Pancreas (tissue), 10 donors: ENCODE measurements at regions of chr11 and their contacts with region 1.

Region 1: DNA sequence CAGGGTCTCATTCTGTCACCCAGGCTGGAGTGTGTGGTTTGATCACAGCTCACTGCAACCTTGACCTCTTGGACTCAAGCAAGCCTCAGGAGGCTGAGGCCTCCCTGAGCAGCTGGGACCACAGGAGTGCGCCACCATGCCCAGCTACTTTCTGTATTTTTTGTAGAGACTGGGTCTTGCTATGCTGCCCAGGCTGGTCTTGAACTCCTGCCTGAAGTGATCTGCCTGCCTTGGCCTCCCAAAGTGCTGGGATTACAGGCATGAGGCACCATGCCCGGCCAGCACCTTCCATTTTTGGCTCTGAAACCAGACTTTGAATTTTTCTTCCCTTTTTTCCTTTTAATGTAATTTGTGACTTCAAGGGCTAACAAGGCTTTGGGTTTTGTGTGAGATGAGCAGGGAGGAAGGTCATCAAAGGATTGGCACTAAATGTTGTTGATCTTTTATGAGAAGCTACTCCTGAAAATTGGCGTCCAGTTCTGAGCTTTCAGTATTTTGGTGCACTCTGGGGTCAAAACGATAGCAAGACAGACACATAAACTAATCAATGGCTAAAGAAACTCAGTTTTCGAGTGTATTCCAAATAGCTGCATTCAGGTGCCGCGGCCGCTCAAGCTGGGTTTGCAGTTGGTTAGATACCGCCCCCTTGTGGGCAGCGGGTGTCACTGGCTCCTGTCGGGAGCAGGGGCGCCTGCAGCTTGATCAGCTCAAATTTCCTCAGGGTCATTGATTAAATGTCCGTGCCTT is 51.9 kb upstream of the CLMP start:
- DNase-seq: peak; percentile 63 to 91 (median 83)
- ATAC-seq: peak; percentile 93 to 100 (median 96)
- H3K4me3 ChIP-seq: no peak overlapping the region
- H3K27ac ChIP-seq: no peak overlapping the region
- H3K4me1 ChIP-seq: no peaks in the 10 kb centered on the region
- H3K27me3 ChIP-seq: no peaks in the 10 kb centered on the region
- CTCF ChIP-seq: peak; percentile 96 to 98 (median 96)

Region 2: GRCh38 chr11:123103326-123103980 is 143.5 kb before region 1 on chr11:
- intact Hi-C with region 1: loop called in 1 of 3 experiments (anchors 5 kb)
- DNase-seq: peak in 1 of 6 donors; percentile 25
- ATAC-seq: peak in 3 of 4 donors; percentile 76 to 83 (median 81)
- H3K4me3 ChIP-seq: no peak overlapping the region
- H3K27ac ChIP-seq: no peak overlapping the region
- H3K4me1 ChIP-seq: no peaks in the 10 kb centered on the region
- H3K27me3 ChIP-seq: no peaks in the 10 kb centered on the region
- CTCF ChIP-seq: peak in 3 of 4 donors; percentile 35 to 45 (median 38)

Region 3: DNA sequence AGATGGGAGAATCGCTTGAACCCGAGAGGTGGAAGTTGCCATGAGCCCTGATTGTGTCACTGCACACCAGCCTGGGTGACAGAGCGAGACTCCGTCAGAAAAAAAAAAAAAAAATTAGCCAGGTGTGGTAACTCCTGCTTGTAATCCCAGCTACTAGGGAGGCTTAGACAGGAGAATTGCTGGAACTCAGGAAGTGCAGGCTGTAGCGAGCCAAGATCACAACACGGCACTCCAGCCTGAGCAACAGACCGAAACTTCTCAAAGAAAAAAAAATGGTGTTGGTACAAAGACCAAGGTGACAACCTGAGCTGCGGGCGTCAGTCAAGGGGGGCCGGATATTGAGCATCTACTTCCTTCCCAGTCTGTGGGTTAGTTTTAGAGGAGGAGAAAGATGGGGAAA is 136.6 kb before region 1 on chr11:
- intact Hi-C with region 1: loop called in 2 of 3 experiments (anchors 5 kb)
- DNase-seq: no peak
- ATAC-seq: no peak
- H3K4me3 ChIP-seq: no peak overlapping the region
- H3K27ac ChIP-seq: no peak overlapping the region
- H3K4me1 ChIP-seq: no peaks in the 10 kb centered on the region
- H3K27me3 ChIP-seq: peaks cover 0 to 4% (median 0%) of the 10 kb centered on the region in 4 donors
- CTCF ChIP-seq: no peak

Region 4: DNA sequence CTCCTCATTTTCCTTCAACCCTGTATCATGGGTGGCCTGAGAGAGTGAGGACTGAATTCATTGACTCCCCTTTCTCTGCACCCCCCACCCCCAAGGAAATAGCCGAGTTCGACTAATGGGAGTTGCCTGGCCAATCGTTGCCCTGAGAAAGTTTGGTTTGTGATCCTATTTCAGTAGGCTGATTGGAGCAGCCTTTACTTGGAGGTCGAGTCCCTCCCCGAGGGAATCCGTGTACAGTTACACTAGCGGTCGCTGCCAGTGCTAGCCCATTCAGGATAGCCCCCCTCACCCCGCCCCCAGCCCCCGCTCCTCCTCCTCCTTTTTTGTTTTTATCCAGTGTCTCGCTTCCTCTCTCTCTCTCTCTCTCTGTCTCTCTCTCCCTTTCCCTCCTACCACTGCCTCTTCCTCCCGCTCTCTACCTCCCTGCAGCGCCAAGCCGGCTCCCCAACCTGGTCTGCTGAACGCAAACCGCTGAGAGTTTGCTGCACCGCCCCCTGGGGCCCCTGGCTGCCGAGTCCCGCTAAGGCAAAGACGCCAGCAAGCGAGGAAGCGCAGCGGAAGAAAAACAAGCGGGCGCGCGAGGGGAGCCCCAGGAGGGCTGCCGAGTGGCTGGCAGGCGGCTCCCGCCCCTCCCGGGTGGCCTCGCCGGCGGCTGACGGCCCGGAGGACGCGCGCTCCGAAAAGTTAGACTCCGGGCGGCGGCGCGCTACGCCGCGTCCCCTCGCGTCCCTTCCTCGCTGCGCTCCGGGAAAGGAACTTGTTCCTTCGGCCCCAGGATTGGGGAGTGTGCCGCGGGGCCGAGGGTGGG is 183.2 kb after region 1 on chr11 and contains the start of gene GRAMD1B:
- intact Hi-C with region 1: no loop called
- DNase-seq: peak in 4 of 6 donors; percentile 11 to 69 (median 39)
- ATAC-seq: peak in 3 of 4 donors; percentile 41 to 61 (median 49)
- H3K4me3 ChIP-seq: peak within 1 kb of the TSS; percentile 16 to 51 (median 28)
- H3K27ac ChIP-seq: peak within 1 kb of the TSS in 2 of 4 donors; percentile 37 to 66
- H3K4me1 ChIP-seq: peaks cover 0 to 5% (median 0%) of the 10 kb centered on the region in 3 donors
- H3K27me3 ChIP-seq: peaks cover 0 to 19% (median 0%) of the 10 kb centered on the region in 4 donors
- CTCF ChIP-seq: no peak
- total RNA-seq, gene GRAMD1B: 1.1 to 4.8 (median 2.2) TPM